GM12878 (cell line): ENCODE measurements at regions of chr14 and their contacts with region 1.

Region 1: DNA sequence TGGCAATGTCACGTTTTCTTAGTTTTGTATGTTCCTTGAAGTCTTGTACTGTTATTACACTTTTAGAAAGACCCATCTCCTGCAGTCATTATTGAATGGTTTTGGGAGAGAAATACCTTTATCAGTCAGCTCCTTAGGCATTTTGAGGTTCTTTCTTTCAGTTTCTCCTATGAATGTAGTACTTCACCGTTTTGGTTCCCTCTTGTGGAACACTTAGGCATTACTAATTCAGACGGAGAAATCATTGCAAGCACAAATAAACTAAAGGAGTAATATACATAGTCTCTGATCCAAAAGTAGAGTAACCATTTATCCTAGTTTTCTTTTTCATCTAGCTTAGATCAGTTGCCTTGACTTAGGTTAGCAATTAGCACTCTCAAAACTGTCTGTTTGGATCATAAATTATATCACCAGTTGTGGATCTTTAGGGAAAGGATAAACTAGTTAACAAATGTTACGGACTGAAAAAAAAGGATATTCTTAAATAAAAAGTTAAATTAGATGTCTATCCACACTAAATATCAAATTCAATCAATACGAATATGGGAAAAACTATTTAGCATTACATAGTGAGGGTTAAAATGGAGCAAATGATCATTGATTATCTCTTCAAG is 1538.3 kb upstream of the SEL1L start:
- DNase-seq: peak; percentile 11
- ATAC-seq: peak; percentile 82
- H3K4me3 ChIP-seq: no peak overlapping the region
- H3K27ac ChIP-seq: no peak overlapping the region
- H3K4me1 ChIP-seq: no peaks in the 10 kb centered on the region
- H3K27me3 ChIP-seq: no peaks in the 10 kb centered on the region
- CTCF ChIP-seq: peak; percentile 38 to 54 (median 47); a peak in 4 of 6 replicates
- EP300 ChIP-seq: no peak
- POLR2A ChIP-seq: no peak
- RAD21 ChIP-seq: peak; percentile 46

Region 2: GRCh38 chr14:82657186-82657675 is 414.8 kb before region 1 on chr14:
- CTCF ChIA-PET with region 1: no interaction called
- POLR2A ChIA-PET with region 1: no interaction called
- RAD21 ChIA-PET with region 1: no interaction called
- SMC1A ChIA-PET with region 1: no interaction called
- in situ Hi-C with region 1: no loop called
- intact Hi-C with region 1: no loop called
- DNase-seq: no peak
- ATAC-seq: no peak
- H3K4me3 ChIP-seq: no peak overlapping the region
- H3K27ac ChIP-seq: no peak overlapping the region
- H3K4me1 ChIP-seq: no peaks in the 10 kb centered on the region
- H3K27me3 ChIP-seq: no peaks in the 10 kb centered on the region
- CTCF ChIP-seq: no peak
- EP300 ChIP-seq: no peak
- POLR2A ChIP-seq: no peak
- RAD21 ChIP-seq: no peak

Region 3: GRCh38 chr14:82999802-83000201 is 72.2 kb before region 1 on chr14:
- CTCF ChIA-PET with region 1: interaction called, 4 read pairs
- POLR2A ChIA-PET with region 1: no interaction called
- RAD21 ChIA-PET with region 1: no interaction called
- SMC1A ChIA-PET with region 1: interaction called, 3 read pairs
- in situ Hi-C with region 1: no loop called
- intact Hi-C with region 1: loop called (anchors 1 kb)
- DNase-seq: no peak
- ATAC-seq: peak; percentile 67
- H3K4me3 ChIP-seq: no peak overlapping the region
- H3K27ac ChIP-seq: no peak overlapping the region
- H3K4me1 ChIP-seq: no peaks in the 10 kb centered on the region
- H3K27me3 ChIP-seq: no peaks in the 10 kb centered on the region
- CTCF ChIP-seq: peak; percentile 5 to 44 (median 19); a peak in 2 of 6 replicates
- EP300 ChIP-seq: no peak
- POLR2A ChIP-seq: no peak
- RAD21 ChIP-seq: no peak